HepG2 (cell line): ENCODE measurements at regions of chr2 and their contacts with region 1.

Region 1: DNA sequence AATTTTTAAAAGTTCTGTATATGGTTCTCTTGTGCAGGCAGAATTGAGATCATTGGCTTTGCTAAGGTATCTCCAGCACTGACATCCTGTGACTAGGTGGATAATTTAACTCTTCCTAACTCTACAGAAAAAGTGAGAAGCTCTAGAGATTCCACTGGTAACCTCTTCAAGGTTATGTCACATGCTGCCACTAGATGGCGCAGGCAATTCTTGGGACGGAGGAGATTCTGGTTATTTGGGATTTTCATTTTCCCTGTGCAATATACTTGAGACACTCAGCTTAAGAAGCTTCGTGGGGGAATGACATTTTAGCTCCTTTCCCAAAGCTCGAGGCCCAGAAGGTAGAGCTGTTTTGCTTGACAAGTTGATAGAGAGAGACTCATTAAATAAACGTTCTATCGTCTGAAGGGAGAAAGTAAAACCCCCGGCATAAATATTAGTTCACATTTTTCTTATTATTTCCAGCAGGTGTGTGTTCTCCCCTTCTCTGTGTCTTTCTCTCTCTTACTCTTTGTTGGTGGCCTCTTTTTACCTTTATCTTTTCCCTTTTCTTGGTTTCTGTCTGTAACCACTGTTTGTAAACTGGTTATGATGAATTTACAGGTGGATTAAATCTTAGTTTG is 26.6 kb upstream of the LANCL1 start:
- DNase-seq: peak; percentile 47
- ATAC-seq: peak; percentile 92
- H3K4me3 ChIP-seq: no peak overlapping the region
- H3K27ac ChIP-seq: no peak overlapping the region
- H3K4me1 ChIP-seq: peaks cover 21% of the 10 kb centered on the region
- H3K27me3 ChIP-seq: no peaks in the 10 kb centered on the region
- CTCF ChIP-seq: peak; percentile 90
- EP300 ChIP-seq: no peak
- POLR2A ChIP-seq: no peak
- RAD21 ChIP-seq: peak; percentile 71

Region 2: GRCh38 chr2:210519594-210519993 is 16.5 kb after region 1 on chr2:
- CTCF ChIA-PET with region 1: no interaction called
- POLR2A ChIA-PET with region 1: no interaction called
- in situ Hi-C with region 1: no loop called
- intact Hi-C with region 1: no loop called
- DNase-seq: no peak
- ATAC-seq: no peak
- H3K4me3 ChIP-seq: no peak overlapping the region
- H3K27ac ChIP-seq: no peak overlapping the region
- H3K4me1 ChIP-seq: peaks cover 31% of the 10 kb centered on the region
- H3K27me3 ChIP-seq: no peaks in the 10 kb centered on the region
- CTCF ChIP-seq: no peak
- EP300 ChIP-seq: no peak
- POLR2A ChIP-seq: no peak
- RAD21 ChIP-seq: no peak

Region 3: GRCh38 chr2:210548878-210549384 is 45.8 kb after region 1 on chr2:
- CTCF ChIA-PET with region 1: no interaction called
- POLR2A ChIA-PET with region 1: no interaction called
- in situ Hi-C with region 1: no loop called
- intact Hi-C with region 1: loop called (anchors 1 kb)
- DNase-seq: peak; percentile 93
- ATAC-seq: peak; percentile 92
- H3K4me3 ChIP-seq: peak overlapping the region in 1 of 3 experiments; percentile 3; a peak in 1 of 6 replicates
- H3K27ac ChIP-seq: peak overlapping the region; percentile 55
- H3K4me1 ChIP-seq: peaks cover 39% of the 10 kb centered on the region
- H3K27me3 ChIP-seq: no peaks in the 10 kb centered on the region
- CTCF ChIP-seq: no peak
- EP300 ChIP-seq: peak; percentile 80 to 99; a peak in 3 of 4 replicates
- POLR2A ChIP-seq: no peak
- RAD21 ChIP-seq: no peak

Region 4: DNA sequence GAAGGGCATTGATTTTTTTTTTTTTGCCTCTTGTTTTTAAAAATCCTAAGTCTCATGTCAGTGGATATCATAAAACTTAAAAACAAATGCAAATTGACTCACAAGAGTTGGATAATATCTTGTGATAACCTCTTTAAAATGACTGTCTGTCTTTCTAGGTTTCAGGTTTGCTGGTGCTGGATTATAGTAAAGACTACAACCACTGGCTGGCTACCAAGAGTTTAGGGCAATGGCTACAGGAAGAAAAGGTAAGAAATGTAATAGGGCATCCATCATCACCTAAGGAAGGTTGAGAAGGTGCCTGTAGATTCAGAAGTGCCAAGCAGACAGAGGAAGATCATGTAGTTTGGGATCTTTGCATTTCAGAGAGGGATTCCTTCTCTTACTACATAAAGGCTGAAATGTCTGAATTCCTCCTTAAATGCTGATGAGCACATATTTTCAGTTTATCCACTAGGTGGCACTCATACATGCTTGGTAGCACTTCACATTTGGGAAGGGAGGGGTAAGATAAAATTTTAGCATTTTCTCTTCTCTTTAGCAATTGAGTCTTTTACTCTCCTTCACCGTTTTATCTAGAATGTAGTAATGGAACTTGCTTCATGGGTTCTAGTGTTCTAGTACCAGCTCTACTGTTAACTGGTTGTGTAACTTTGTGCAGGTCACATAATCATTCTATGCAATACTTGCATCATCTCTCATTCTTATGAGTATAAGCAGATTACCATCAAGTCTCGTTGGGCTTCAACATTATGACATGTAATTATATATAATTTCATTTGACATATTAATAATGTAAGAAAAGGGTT is 74.4 kb after region 1 on chr2:
- CTCF ChIA-PET with region 1: interaction called, 16 read pairs
- POLR2A ChIA-PET with region 1: no interaction called
- in situ Hi-C with region 1: no loop called
- intact Hi-C with region 1: loop called (anchors 2 kb)
- DNase-seq: peak; percentile 56
- ATAC-seq: peak; percentile 90
- H3K4me3 ChIP-seq: no peak overlapping the region
- H3K27ac ChIP-seq: no peak overlapping the region
- H3K4me1 ChIP-seq: no peaks in the 10 kb centered on the region
- H3K27me3 ChIP-seq: no peaks in the 10 kb centered on the region
- CTCF ChIP-seq: peak; percentile 83
- EP300 ChIP-seq: no peak
- POLR2A ChIP-seq: no peak
- RAD21 ChIP-seq: no peak

Region 5: DNA sequence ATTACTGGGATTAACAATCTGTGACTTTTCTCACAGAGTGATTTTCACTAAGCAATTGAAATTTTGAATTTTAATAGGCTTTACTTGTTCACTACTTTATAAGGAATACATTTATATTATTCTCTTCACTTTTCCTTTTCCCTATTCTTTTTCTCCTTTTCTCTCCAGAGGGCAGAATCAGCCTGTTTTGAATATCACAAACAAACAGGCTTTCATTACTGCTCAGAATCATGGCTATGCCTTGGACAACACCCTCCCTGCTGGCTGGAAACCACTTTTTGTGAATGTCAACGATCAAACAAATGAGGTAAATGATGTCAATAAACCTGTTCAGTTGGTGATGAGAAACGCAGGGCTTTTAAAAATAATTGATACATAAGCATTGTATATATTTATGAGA is 88.6 kb after region 1 on chr2:
- CTCF ChIA-PET with region 1: no interaction called
- POLR2A ChIA-PET with region 1: no interaction called
- in situ Hi-C with region 1: no loop called
- intact Hi-C with region 1: no loop called
- DNase-seq: no peak
- ATAC-seq: no peak
- H3K4me3 ChIP-seq: no peak overlapping the region
- H3K27ac ChIP-seq: no peak overlapping the region
- H3K4me1 ChIP-seq: no peaks in the 10 kb centered on the region
- H3K27me3 ChIP-seq: no peaks in the 10 kb centered on the region
- CTCF ChIP-seq: no peak
- EP300 ChIP-seq: no peak
- POLR2A ChIP-seq: no peak
- RAD21 ChIP-seq: no peak

Region 6: GRCh38 chr2:210617732-210618330 is 114.7 kb after region 1 on chr2:
- CTCF ChIA-PET with region 1: interaction called, 3 read pairs
- POLR2A ChIA-PET with region 1: no interaction called
- in situ Hi-C with region 1: no loop called
- intact Hi-C with region 1: loop called (anchors 2 kb)
- DNase-seq: peak; percentile 64
- ATAC-seq: peak; percentile 96
- H3K4me3 ChIP-seq: no peak overlapping the region
- H3K27ac ChIP-seq: no peak overlapping the region
- H3K4me1 ChIP-seq: peaks cover 8% of the 10 kb centered on the region; the same call in 1 of the 2 replicates
- H3K27me3 ChIP-seq: no peaks in the 10 kb centered on the region
- CTCF ChIP-seq: peak; percentile 84
- EP300 ChIP-seq: no peak
- POLR2A ChIP-seq: no peak
- RAD21 ChIP-seq: peak; percentile 70